Caco-2 (cell line): ENCODE measurements at regions of chr2 and their contacts with region 1.

Region 1: DNA sequence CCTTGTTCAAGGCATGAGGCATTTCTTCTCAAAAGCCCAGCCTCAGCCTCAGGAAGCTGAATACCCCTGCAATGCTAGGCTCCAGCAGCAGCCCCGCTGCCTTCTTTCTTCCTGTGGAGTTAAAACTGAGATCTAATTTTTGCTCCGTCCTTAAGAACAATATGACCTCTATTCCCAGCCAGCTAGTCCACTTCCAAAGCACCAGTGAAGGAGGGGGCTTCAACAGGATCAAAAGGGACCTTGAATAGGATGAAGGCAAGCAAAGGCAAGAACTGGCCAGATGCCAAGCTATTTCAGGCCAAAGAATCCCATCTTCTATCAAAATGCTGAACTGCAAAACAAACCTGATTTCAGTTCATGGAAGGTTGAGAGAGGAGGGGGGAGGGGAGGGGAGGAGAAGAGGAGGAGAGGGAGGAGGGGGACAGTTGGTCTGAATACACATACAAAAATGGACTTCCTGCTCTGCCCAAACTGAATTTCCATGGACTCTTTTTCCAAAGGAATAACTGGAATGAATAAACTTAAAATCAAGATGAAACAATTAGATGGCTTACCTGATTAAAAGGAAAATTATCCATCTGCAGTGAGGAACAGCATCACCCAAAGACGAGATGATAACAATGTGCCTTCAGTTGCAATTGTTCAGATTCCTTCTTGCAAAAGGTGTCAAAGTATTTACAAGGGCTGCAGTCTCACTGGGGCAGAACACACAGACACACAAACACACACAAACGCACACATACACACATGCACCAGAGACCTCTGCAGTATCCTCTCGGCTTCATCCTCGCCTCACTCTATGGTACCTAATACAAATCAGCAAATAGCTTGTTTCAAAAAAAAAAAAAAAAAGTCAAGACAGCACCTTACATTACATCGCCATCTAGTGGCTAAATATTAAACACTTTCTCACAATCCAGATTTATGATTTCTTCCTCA is at the start of gene SCN1A:
- DNase-seq: peak in 1 of 2 experiments; percentile 32
- H3K4me3 ChIP-seq: no peak within 1 kb of the TSS
- H3K4me3 Mint-ChIP-seq: no peak within 1 kb of the TSS
- H3K27ac Mint-ChIP-seq: no peak within 1 kb of the TSS
- H3K4me1 ChIP-seq: no peaks in the 10 kb centered on the region
- H3K4me1 Mint-ChIP-seq: no peaks in the 10 kb centered on the region
- H3K27me3 ChIP-seq: no peaks in the 10 kb centered on the region; the same call in 1 of the 2 replicates
- H3K27me3 Mint-ChIP-seq: peaks cover 6% of the 10 kb centered on the region
- CTCF ChIP-seq: peak; percentile 53 to 55
- total RNA-seq, gene SCN1A: not detected in 2 replicates

Region 2: DNA sequence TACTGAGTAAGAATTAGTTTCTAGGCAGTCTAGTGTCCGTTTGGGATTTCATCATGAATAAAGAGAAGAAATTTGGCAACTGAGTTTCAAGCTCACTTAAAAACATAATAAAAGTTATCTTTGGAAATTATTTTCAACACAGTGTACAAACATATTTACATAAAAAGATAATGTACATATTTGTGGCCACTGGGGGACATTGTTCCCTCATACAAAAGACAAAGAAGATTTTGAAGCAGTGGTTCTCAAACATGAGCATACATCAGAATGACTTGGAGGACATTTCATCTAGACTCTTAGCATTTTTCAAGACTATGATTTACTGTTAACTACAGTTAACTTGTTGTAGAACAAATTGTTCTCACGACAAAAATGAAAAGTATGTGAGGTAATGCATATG is 158.3 kb before region 1 on chr2:
- CTCF ChIA-PET with region 1: no interaction called
- POLR2A ChIA-PET with region 1: no interaction called
- intact Hi-C with region 1: loop called (anchors 2 kb)
- DNase-seq: no peak
- H3K4me3 ChIP-seq: no peak overlapping the region
- H3K4me3 Mint-ChIP-seq: no peak overlapping the region
- H3K27ac Mint-ChIP-seq: no peak overlapping the region
- H3K4me1 ChIP-seq: no peaks in the 10 kb centered on the region
- H3K4me1 Mint-ChIP-seq: peaks cover 7% of the 10 kb centered on the region
- H3K27me3 ChIP-seq: no peaks in the 10 kb centered on the region
- H3K27me3 Mint-ChIP-seq: peaks cover 12% of the 10 kb centered on the region
- CTCF ChIP-seq: no peak

Region 3: GRCh38 chr2:165989851-165990250 is 137.6 kb before region 1 on chr2:
- CTCF ChIA-PET with region 1: no interaction called
- POLR2A ChIA-PET with region 1: no interaction called
- intact Hi-C with region 1: no loop called
- DNase-seq: no peak
- H3K4me3 ChIP-seq: no peak overlapping the region
- H3K4me3 Mint-ChIP-seq: no peak overlapping the region
- H3K27ac Mint-ChIP-seq: no peak overlapping the region
- H3K4me1 ChIP-seq: no peaks in the 10 kb centered on the region
- H3K4me1 Mint-ChIP-seq: no peaks in the 10 kb centered on the region
- H3K27me3 ChIP-seq: no peaks in the 10 kb centered on the region
- H3K27me3 Mint-ChIP-seq: peaks cover 18% of the 10 kb centered on the region
- CTCF ChIP-seq: no peak

Region 4: GRCh38 chr2:166057370-166058164 is 69.9 kb before region 1 on chr2:
- CTCF ChIA-PET with region 1: interaction called, 6 read pairs
- POLR2A ChIA-PET with region 1: no interaction called
- intact Hi-C with region 1: loop called (anchors 1 kb)
- DNase-seq: peak in 1 of 2 experiments; percentile 5
- H3K4me3 ChIP-seq: no peak overlapping the region
- H3K4me3 Mint-ChIP-seq: no peak overlapping the region
- H3K27ac Mint-ChIP-seq: no peak overlapping the region
- H3K4me1 ChIP-seq: no peaks in the 10 kb centered on the region
- H3K4me1 Mint-ChIP-seq: no peaks in the 10 kb centered on the region
- H3K27me3 ChIP-seq: no peaks in the 10 kb centered on the region
- H3K27me3 Mint-ChIP-seq: peaks cover 4% of the 10 kb centered on the region
- CTCF ChIP-seq: peak; percentile 53 to 58